HCT116 (cell line): ENCODE measurements at regions of chr11 and their contacts with region 1.

Region 1: DNA sequence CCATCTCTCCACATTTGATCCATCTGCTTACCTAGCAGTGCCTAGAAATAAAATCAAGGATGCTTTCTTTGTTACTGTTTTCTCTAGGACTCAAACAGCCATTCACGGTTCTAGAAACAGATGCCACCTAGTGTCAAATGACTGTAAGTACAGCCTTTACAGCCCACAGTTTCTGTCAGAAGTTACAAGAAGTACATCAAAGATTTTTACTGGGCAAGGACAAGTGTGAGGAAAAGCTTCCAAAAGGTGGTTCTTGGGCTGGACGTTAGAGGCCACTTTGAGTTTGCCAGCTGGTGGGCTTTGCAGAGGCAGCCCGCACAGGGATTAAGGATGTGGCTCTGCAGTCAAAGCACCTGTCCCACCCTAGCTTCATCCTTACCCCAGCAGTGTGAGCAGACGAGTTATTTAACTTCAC is 6.9 kb downstream of the KMT5B start:
- DNase-seq: peak; percentile 53
- ATAC-seq: peak; percentile 67
- H3K4me3 ChIP-seq: no peak overlapping the region
- H3K27ac ChIP-seq: no peak overlapping the region
- H3K4me1 ChIP-seq: peaks cover 0 to 7% of the 10 kb centered on the region in 2 experiments; a peak in 2 of 4 replicates
- H3K27me3 ChIP-seq: no peaks in the 10 kb centered on the region
- CTCF ChIP-seq: peak; percentile 75 to 82 (median 81)
- POLR2A ChIP-seq: no peak
- RAD21 ChIP-seq: peak; percentile 77

Region 2: GRCh38 chr11:68010090-68011041 is 195.8 kb before region 1 on chr11 and contains the start of gene ALDH3B1:
- CTCF ChIA-PET with region 1: interaction called, 5 read pairs
- POLR2A ChIA-PET with region 1: no interaction called
- RAD21 ChIA-PET with region 1: no interaction called
- intact Hi-C with region 1: loop called (anchors 5 kb)
- DNase-seq: peak; percentile 60
- ATAC-seq: peak; percentile 64
- H3K4me3 ChIP-seq: peak within 1 kb of the TSS; percentile 57 to 71
- H3K27ac ChIP-seq: peak within 1 kb of the TSS; percentile 96
- H3K4me1 ChIP-seq: peaks cover 70 to 80% of the 10 kb centered on the region in 2 experiments
- H3K27me3 ChIP-seq: no peaks in the 10 kb centered on the region
- CTCF ChIP-seq: no peak
- POLR2A ChIP-seq: peak; percentile 38
- RAD21 ChIP-seq: no peak
- total RNA-seq, gene ALDH3B1: 25.5 TPM

Region 3: GRCh38 chr11:68025047-68025446 is 181.1 kb before region 1 on chr11:
- CTCF ChIA-PET with region 1: no interaction called
- POLR2A ChIA-PET with region 1: no interaction called
- RAD21 ChIA-PET with region 1: no interaction called
- intact Hi-C with region 1: loop called (anchors 5 kb)
- DNase-seq: no peak
- ATAC-seq: peak; percentile 29
- H3K4me3 ChIP-seq: no peak overlapping the region
- H3K27ac ChIP-seq: no peak overlapping the region
- H3K4me1 ChIP-seq: peaks cover 39 to 69% of the 10 kb centered on the region in 2 experiments
- H3K27me3 ChIP-seq: no peaks in the 10 kb centered on the region
- CTCF ChIP-seq: peak in 1 of 3 experiments; percentile 19; a peak in 2 of 6 replicates
- POLR2A ChIP-seq: no peak
- RAD21 ChIP-seq: no peak